Head of caudate nucleus (tissue), 42 donors: ENCODE measurements at regions of chr2 and their contacts with region 1.

Region 1: GRCh38 chr2:221573430-221574230 is 1.5 kb upstream of the EPHA4 start:
- DNase-seq: peak; percentile 74 to 97 (median 91)

Region 2: GRCh38 chr2:219731173-219731572 is 1842.5 kb before region 1 on chr2:
- intact Hi-C with region 1: loop called (anchors 5 kb)
- DNase-seq: no peak

Region 3: DNA sequence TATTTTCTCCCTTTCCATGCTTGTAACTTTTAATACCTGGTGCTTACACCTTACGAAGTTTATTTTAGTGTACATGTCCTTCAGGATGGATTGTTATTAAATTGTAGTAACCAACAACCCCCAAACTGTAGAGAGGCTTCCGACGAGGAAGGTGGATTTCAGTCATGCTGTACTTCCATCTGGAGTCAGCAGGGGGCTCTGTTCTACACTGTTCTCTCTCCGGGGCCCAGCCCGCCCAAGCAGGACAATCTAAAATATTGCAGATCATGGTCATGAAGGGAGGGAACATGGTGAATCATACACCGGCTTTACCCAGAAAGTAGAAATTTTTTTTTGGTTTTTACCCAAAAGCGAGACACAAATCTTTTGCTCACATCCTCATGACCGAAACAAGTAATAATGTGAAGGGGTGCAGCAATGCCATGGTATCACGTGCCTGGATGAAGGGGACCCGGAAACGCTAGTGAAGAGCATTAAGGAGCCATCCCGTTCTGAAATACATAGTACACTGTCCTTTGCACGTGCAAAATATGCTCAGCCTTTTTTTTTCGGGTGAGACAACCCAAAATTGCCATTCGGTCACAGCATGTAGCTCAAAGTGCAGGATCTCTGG is 886.3 kb before region 1 on chr2:
- intact Hi-C with region 1: loop called (anchors 2 kb)
- DNase-seq: peak; percentile 25 to 90 (median 74)

Region 4: DNA sequence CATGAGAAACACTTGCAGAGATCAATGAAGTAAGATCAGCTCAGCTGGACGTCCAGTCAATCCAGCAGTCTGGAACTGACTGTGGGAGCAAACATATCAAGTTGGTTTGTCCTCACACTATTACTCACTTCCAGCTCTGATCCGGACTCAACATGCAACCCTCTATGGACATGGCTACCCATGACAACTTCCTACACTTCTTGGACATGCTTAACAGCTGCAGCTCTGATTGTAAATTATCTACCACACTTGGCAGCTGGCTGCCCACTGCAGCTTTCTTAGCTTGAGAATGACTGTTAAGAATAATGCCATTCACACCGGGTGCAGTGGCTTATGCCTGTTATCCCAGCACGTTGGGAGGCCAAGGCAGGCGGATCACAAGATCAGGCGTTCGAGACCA is 431.3 kb before region 1 on chr2:
- intact Hi-C with region 1: no loop called
- DNase-seq: no peak

Region 5: GRCh38 chr2:221779614-221780067 is 206.0 kb after region 1 on chr2:
- intact Hi-C with region 1: no loop called
- DNase-seq: peak in 5 of 42 donors; percentile 3 to 43 (median 19)